Right ventricle myocardium superior (tissue), 1 donor: ENCODE measurements at regions of chr2 and their contacts with region 1.

Region 1: GRCh38 chr2:29195796-29196195 is 80.6 kb downstream of the CLIP4 start:
- DNase-seq: no peak
- ATAC-seq: no peak

Region 2: GRCh38 chr2:28958689-28959088 is 237.1 kb before region 1 on chr2:
- intact Hi-C with region 1: loop called (anchors 2 kb)
- DNase-seq: peak; percentile 72
- ATAC-seq: peak; percentile 93